ENCODE measurements at regions of chr10 and their contacts with region 1.

Region 1: GRCh38 chr10:93431361-93431760 is 50.8 kb downstream of the MYOF start:
- DNase-seq: no peak
- H3K4me3 ChIP-seq: no peak overlapping the region
- H3K27ac ChIP-seq: no peak overlapping the region
- H3K4me1 ChIP-seq: peaks cover 17% of the 10 kb centered on the region
- CTCF ChIP-seq: no peak

Region 2: GRCh38 chr10:92567952-92568600 is 863.3 kb before region 1 on chr10:
- CTCF ChIA-PET with region 1: no interaction called
- POLR2A ChIA-PET with region 1: no interaction called
- intact Hi-C with region 1: no loop called
- DNase-seq: no peak
- H3K4me3 ChIP-seq: no peak overlapping the region
- H3K27ac ChIP-seq: no peak overlapping the region
- H3K4me1 ChIP-seq: peaks cover 19% of the 10 kb centered on the region
- CTCF ChIP-seq: no peak

Region 3: GRCh38 chr10:93363891-93364648 is 67.3 kb before region 1 on chr10:
- CTCF ChIA-PET with region 1: no interaction called
- POLR2A ChIA-PET with region 1: no interaction called
- intact Hi-C with region 1: no loop called
- DNase-seq: no peak
- H3K4me3 ChIP-seq: no peak overlapping the region
- H3K27ac ChIP-seq: no peak overlapping the region
- H3K4me1 ChIP-seq: no peaks in the 10 kb centered on the region
- CTCF ChIP-seq: no peak

Region 4: DNA sequence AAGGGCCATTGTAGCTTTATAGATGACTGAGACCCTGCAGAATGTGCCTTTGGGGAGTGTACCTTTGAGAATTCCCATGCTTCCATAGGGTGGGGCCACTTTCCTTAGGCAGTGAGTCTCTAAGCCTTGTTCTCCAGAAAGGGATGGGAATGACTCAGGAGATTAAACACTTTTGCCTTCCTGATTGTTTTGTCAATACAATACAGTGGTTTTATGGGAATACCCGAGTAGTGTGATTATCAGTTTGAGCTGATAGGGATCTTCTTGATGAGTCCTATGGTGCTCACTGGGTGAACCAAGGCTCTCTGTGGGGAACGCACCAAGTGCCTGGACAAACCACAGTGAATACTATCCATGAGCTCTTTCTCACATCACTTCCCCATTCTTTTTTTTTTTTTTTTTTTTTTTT is 44.5 kb after region 1 on chr10:
- CTCF ChIA-PET with region 1: no interaction called
- POLR2A ChIA-PET with region 1: no interaction called
- intact Hi-C with region 1: loop called (anchors 2 kb)
- DNase-seq: no peak
- H3K4me3 ChIP-seq: no peak overlapping the region
- H3K27ac ChIP-seq: no peak overlapping the region
- H3K4me1 ChIP-seq: no peaks in the 10 kb centered on the region
- CTCF ChIP-seq: no peak

Region 5: DNA sequence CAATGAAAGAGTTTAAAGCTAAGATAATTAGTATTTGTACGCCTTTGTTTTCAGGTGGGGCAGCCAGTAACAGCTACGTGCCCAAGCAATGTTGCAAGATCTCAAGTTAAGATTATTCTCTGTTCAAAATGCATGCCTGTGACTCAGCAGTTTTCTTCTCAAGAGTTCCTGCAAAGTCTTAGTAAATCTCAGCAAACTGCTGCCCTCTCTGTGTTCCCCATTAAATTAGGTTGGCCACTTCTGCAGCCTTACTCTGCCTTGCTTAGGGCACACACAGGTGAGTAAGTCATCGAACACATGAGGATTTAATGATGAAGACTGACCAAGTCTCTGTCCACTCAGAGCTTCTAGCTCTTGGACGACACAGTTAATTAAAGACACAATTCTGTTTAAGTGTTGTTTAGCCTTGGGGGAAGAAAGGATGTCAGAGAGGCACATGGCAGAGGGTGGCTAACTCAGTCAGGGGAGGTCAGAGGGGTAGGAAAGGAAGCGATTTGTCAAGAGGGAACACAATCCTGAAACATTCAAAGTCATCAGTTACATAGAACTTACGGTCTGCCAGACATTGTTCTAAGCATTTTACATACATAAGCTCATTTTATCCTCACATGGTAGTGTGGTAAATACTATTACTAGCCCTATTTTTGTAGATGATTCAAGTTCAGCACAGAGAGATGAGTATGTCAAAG is 442.2 kb after region 1 on chr10:
- CTCF ChIA-PET with region 1: no interaction called
- POLR2A ChIA-PET with region 1: no interaction called
- intact Hi-C with region 1: no loop called
- DNase-seq: no peak
- H3K4me3 ChIP-seq: no peak overlapping the region
- H3K27ac ChIP-seq: no peak overlapping the region
- H3K4me1 ChIP-seq: no peaks in the 10 kb centered on the region
- CTCF ChIP-seq: no peak

Measured in OCI-LY7 (cell line).